ENCODE measurements at regions of chr7 and their contacts with region 1.

Region 1: DNA sequence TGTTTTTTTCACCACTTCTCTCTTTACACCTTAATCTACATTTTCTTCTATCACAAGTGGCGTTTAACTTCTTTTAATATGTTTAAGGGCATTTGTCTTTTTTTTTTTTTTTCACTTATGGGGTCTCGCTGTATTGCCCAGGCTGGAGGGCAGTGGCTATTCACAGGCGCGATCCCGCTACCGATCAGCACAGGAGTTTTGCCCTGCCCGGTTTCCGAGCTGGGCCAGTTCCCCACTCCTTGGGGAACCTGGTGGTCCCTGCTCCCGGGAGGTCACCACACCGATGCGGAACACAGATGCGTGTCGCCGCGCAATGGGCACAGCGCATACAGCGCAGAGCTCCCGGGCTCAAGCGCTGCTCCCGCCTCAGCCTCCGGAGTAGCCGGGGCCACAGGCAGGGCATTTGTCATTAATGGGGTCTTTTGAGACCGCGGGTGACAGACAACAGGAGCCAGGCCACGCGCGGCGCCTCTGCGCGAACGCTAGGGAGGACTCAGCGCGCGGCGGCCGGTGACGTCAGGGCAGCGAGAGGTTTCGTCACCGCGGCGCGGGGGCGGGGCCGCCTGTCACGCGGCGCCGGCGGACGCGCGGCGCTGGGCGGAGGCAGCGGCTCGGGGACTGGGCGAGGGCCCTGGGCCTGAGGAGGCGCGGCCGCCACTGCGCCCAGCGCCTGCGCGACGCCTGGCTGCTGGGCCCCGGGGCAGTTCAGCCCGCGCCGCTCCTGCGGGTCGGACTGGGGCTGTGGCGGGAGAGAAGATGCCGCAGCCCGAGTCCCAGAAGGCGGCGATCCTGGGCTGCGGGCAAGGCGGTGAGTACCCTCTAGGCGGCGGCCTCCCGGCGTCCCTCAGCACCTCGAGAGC is at the start of gene GALNT11:
- DNase-seq: peak; percentile 76 to 95 (median 89)
- ATAC-seq: peak; percentile 78
- H3K4me3 ChIP-seq: peak within 1 kb of the TSS; percentile 66 to 81
- H3K4me3 Mint-ChIP-seq: peak within 1 kb of the TSS; percentile 87
- H3K27ac ChIP-seq: peak within 1 kb of the TSS; percentile 80 to 85
- H3K27ac Mint-ChIP-seq: peak within 1 kb of the TSS; percentile 95
- H3K4me1 ChIP-seq: peaks cover 37% of the 10 kb centered on the region
- H3K4me1 Mint-ChIP-seq: peaks cover 45% of the 10 kb centered on the region
- H3K27me3 ChIP-seq: no peaks in the 10 kb centered on the region
- H3K27me3 Mint-ChIP-seq: no peaks in the 10 kb centered on the region
- CTCF ChIP-seq: peak; percentile 17
- total RNA-seq, gene GALNT11: 43.1 to 44.5 TPM

Region 2: GRCh38 chr7:151028131-151028947 is 997.0 kb before region 1 on chr7 and contains the start of gene ABCB8:
- CTCF ChIA-PET with region 1: no interaction called
- POLR2A ChIA-PET with region 1: no interaction called
- intact Hi-C with region 1: loop called in 1 of 2 experiments (anchors 5 kb)
- DNase-seq: peak; percentile 93 to 99 (median 98)
- ATAC-seq: peak; percentile 92
- H3K4me3 ChIP-seq: peak within 1 kb of the TSS; percentile 67 to 75
- H3K4me3 Mint-ChIP-seq: peak within 1 kb of the TSS; percentile 96
- H3K27ac ChIP-seq: peak within 1 kb of the TSS; percentile 94 to 96
- H3K27ac Mint-ChIP-seq: peak within 1 kb of the TSS; percentile 99
- H3K4me1 ChIP-seq: peaks cover 12% of the 10 kb centered on the region
- H3K4me1 Mint-ChIP-seq: peaks cover 24% of the 10 kb centered on the region
- H3K27me3 ChIP-seq: no peaks in the 10 kb centered on the region
- H3K27me3 Mint-ChIP-seq: no peaks in the 10 kb centered on the region
- CTCF ChIP-seq: peak; percentile 35
- total RNA-seq, gene ABCB8: 43.6 to 49.3 TPM

Region 3: DNA sequence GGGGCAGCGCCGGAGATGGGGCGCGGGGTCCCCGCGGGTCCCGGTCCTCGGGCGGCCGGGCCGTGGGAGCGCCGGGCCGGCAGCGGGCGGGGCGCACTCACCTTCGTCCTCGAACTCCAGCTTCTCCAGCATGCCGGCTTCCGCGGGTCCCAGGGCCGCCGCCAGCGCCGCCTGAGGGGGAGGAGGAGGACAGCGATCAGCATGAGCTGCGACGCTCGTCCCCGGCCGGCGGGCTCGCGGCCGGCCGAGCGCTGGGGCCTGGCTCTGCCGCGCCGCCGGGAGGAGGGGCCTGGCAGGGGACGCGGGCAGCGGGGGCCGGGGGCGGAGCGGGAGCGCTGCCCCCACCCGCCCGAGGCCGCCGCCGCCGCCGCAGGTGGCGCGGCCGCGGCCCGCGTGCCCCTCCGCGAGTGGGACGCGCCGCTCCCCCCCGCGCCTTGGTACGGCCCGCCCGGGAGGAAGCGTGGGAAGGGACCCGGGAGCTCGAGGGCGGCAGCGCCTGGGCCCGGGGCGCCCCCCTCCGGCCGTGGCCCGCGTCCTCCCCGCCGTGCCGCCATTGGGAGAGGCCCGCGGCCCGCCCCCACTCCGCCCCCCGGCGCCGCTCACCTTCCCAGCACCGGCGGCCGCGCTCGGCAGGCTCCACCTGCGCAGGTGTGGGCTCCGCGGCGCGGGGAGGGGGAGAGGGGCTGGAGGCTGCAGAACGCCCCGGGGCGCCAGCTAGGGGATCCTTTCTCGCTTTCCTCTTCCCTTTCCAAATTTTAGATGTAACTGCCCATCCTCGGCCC is 393.1 kb before region 1 on chr7:
- CTCF ChIA-PET with region 1: no interaction called
- POLR2A ChIA-PET with region 1: no interaction called
- intact Hi-C with region 1: loop called (anchors 5 kb)
- DNase-seq: peak; percentile 72 to 95 (median 87)
- ATAC-seq: peak; percentile 82
- H3K4me3 ChIP-seq: peak overlapping the region; percentile 68 to 85
- H3K4me3 Mint-ChIP-seq: peak overlapping the region; percentile 98
- H3K27ac ChIP-seq: peak overlapping the region; percentile 68 to 82
- H3K27ac Mint-ChIP-seq: peak overlapping the region; percentile 98
- H3K4me1 ChIP-seq: peaks cover 18% of the 10 kb centered on the region
- H3K4me1 Mint-ChIP-seq: peaks cover 39% of the 10 kb centered on the region
- H3K27me3 ChIP-seq: no peaks in the 10 kb centered on the region
- H3K27me3 Mint-ChIP-seq: no peaks in the 10 kb centered on the region
- CTCF ChIP-seq: no peak

Region 4: DNA sequence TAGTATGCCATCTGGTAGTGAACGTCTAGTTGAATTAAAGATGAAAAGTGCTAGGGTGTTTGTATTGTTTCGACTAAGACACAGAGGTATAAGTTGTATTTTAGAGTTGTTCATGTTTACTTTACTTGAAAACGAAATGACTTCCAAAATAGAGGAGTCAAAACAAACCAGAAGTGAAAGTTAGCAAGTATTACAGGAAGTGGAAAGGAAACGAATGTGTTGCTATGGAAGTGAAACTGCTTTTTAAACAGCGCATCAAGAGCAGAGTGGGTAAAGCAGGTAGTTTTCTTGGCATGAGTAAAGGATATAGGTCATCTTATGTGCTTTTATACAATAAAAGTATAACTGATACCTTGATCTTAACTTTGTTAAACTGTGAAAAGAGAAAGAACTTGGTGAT is 89.1 kb before region 1 on chr7:
- CTCF ChIA-PET with region 1: interaction called, 3 read pairs
- POLR2A ChIA-PET with region 1: no interaction called
- intact Hi-C with region 1: loop called (anchors 5 kb)
- DNase-seq: peak in 2 of 9 experiments; percentile 61 to 81
- ATAC-seq: peak; percentile 91
- H3K4me3 ChIP-seq: peak overlapping the region; percentile 4 to 24
- H3K4me3 Mint-ChIP-seq: peak overlapping the region; percentile 80
- H3K27ac ChIP-seq: peak overlapping the region; percentile 54 to 77
- H3K27ac Mint-ChIP-seq: peak overlapping the region; percentile 96
- H3K4me1 ChIP-seq: peaks cover 15% of the 10 kb centered on the region
- H3K4me1 Mint-ChIP-seq: peaks cover 17% of the 10 kb centered on the region
- H3K27me3 ChIP-seq: peaks cover 0 to 3% of the 10 kb centered on the region in 2 experiments
- H3K27me3 Mint-ChIP-seq: no peaks in the 10 kb centered on the region
- CTCF ChIP-seq: no peak

Region 5: GRCh38 chr7:152145853-152146466 is 120.7 kb after region 1 on chr7:
- CTCF ChIA-PET with region 1: no interaction called
- POLR2A ChIA-PET with region 1: no interaction called
- intact Hi-C with region 1: loop called (anchors 2 to 5 kb)
- DNase-seq: peak in 7 of 9 experiments; percentile 11 to 65 (median 43)
- ATAC-seq: peak; percentile 46
- H3K4me3 ChIP-seq: no peak overlapping the region
- H3K4me3 Mint-ChIP-seq: no peak overlapping the region
- H3K27ac ChIP-seq: peak overlapping the region in 1 of 2 experiments; percentile 61
- H3K27ac Mint-ChIP-seq: peak overlapping the region; percentile 91
- H3K4me1 ChIP-seq: peaks cover 47% of the 10 kb centered on the region
- H3K4me1 Mint-ChIP-seq: peaks cover 46% of the 10 kb centered on the region
- H3K27me3 ChIP-seq: no peaks in the 10 kb centered on the region
- H3K27me3 Mint-ChIP-seq: no peaks in the 10 kb centered on the region
- CTCF ChIP-seq: peak; percentile 53

Region 6: GRCh38 chr7:152759949-152760853 is 734.9 kb after region 1 on chr7:
- CTCF ChIA-PET with region 1: no interaction called
- POLR2A ChIA-PET with region 1: no interaction called
- intact Hi-C with region 1: loop called in 1 of 2 experiments (anchors 5 kb)
- DNase-seq: peak in 7 of 9 experiments; percentile 4 to 52 (median 22)
- ATAC-seq: peak; percentile 26
- H3K4me3 ChIP-seq: peak overlapping the region; percentile 58 to 79
- H3K4me3 Mint-ChIP-seq: peak overlapping the region; percentile 94
- H3K27ac ChIP-seq: peak overlapping the region; percentile 58 to 88
- H3K27ac Mint-ChIP-seq: peak overlapping the region; percentile 92
- H3K4me1 ChIP-seq: peaks cover 20% of the 10 kb centered on the region
- H3K4me1 Mint-ChIP-seq: peaks cover 28% of the 10 kb centered on the region
- H3K27me3 ChIP-seq: no peaks in the 10 kb centered on the region
- H3K27me3 Mint-ChIP-seq: no peaks in the 10 kb centered on the region
- CTCF ChIP-seq: no peak

Measured in CD8-positive, alpha-beta T cell (primary cell).